Mammary epithelial cell (primary cell): ENCODE measurements at regions of chr7 and their contacts with region 1.

Region 1: GRCh38 chr7:27095897-27096767 is at the start of gene HOXA1:
- DNase-seq: peak; percentile 92
- H3K4me3 ChIP-seq: peak within 1 kb of the TSS; percentile 82 to 97 (median 91)
- H3K27ac ChIP-seq: peak within 1 kb of the TSS; percentile 97
- H3K4me1 ChIP-seq: peaks cover 26% of the 10 kb centered on the region
- H3K27me3 ChIP-seq: no peaks in the 10 kb centered on the region
- CTCF ChIP-seq: no peak
- total RNA-seq, gene HOXA1: 2.5 to 9.4 TPM

Region 2: GRCh38 chr7:26585081-26585641 is 511.0 kb before region 1 on chr7:
- CTCF ChIA-PET with region 1: no interaction called
- dilution Hi-C with region 1: no loop called
- in situ Hi-C with region 1: no loop called
- intact Hi-C with region 1: no loop called
- DNase-seq: peak; percentile 22
- H3K4me3 ChIP-seq: no peak overlapping the region
- H3K27ac ChIP-seq: no peak overlapping the region
- H3K4me1 ChIP-seq: no peaks in the 10 kb centered on the region
- H3K27me3 ChIP-seq: no peaks in the 10 kb centered on the region
- CTCF ChIP-seq: no peak

Region 3: DNA sequence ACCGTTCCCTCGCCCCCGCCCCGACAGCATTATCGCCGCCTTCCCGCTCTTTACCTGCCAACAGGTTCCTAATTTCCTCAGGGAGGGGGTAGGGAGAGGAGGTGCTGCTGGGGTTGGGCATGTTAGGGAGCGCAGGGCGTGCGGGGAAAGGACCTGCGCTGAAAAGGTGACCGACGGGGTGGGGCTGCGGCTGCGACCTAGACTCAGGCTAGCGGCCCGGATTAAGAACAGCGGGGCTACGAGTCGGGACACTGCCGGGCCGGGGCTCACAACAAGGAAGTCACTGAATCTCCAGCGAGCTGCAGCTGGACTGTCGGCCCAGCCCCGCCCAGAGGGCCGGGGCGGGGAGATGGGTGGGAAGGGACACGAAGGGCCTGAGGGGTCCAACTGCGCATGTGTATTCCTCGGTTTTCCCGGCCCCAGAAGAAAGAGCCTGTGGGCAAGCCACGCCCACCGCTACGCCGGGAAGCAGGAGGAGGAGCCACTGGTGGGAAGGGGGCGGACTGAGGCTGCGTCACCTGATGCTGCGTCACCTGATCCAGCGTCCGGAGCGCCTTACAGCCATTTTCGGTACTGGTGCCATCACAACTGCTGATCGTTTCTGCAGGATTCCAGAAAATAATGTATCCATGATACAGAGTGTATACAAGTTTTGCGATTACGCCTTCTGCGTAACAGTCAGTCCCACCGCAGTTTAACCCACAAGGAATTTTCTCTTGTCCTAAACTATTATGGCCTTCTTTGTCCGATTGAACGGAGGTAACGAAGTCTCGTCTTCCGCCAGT is 231.6 kb before region 1 on chr7 and contains the start of gene SKAP2:
- CTCF ChIA-PET with region 1: no interaction called
- dilution Hi-C with region 1: loop called (anchors 5 kb)
- in situ Hi-C with region 1: loop called in 1 of 2 experiments (anchors 5 kb)
- intact Hi-C with region 1: loop called (anchors 1 kb)
- DNase-seq: peak; percentile 99
- H3K4me3 ChIP-seq: peak within 1 kb of the TSS; percentile 54 to 73 (median 72)
- H3K27ac ChIP-seq: peak within 1 kb of the TSS; percentile 93
- H3K4me1 ChIP-seq: peaks cover 31% of the 10 kb centered on the region
- H3K27me3 ChIP-seq: no peaks in the 10 kb centered on the region
- CTCF ChIP-seq: no peak
- total RNA-seq, gene SKAP2: 19.8 to 38.9 TPM

Region 4: GRCh38 chr7:26948617-26949118 is 147.5 kb before region 1 on chr7:
- CTCF ChIA-PET with region 1: no interaction called
- dilution Hi-C with region 1: no loop called
- in situ Hi-C with region 1: no loop called
- intact Hi-C with region 1: loop called (anchors 1 kb)
- DNase-seq: peak; percentile 91
- H3K4me3 ChIP-seq: peak overlapping the region in 1 of 3 experiments; percentile 8
- H3K27ac ChIP-seq: peak overlapping the region; percentile 75
- H3K4me1 ChIP-seq: peaks cover 16% of the 10 kb centered on the region
- H3K27me3 ChIP-seq: no peaks in the 10 kb centered on the region
- CTCF ChIP-seq: no peak

Region 5: DNA sequence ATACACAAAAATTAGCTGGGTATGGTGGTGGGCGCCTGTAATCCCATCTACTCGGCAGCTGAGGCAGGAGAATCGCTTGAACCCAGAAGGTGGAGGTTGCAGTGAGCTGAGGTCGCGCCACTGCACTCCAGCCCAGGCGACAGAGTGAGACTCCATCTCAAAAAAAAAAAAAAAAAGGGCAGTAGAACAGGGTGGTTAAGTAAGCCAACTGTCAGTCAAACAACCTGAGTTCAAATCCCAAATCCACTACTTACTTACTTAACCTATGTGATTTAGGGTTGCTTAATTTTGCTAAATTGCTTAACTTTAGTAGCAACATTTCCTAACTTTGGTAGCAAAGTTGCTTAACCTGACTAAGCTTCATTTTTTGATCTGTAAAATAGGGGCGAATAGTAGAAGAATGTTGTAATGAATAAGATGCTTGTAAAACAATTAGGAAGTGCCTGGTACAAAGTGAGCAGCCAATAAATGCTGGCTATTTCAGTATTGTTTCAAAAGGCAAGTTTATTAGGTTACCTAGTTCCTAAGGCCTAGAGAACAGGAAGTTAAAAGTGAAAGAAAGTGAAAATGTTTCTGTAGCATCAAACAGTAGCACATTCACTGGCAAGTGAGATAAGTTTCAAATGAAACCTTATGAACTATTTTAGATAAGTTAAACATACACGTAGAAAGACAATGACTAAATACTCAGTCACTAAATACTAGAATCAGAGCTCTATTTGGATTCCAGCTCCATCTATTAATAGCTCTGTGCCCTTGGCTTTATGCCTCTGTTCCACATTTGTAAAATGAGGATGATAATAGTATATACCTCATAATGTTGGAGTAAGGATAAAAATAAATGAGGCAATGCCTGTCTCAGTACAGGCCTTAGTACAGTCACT is 64.6 kb before region 1 on chr7:
- CTCF ChIA-PET with region 1: no interaction called
- dilution Hi-C with region 1: no loop called
- in situ Hi-C with region 1: no loop called
- intact Hi-C with region 1: loop called (anchors 2 kb)
- DNase-seq: peak; percentile 61
- H3K4me3 ChIP-seq: peak overlapping the region in 2 of 3 experiments; percentile 0 to 4
- H3K27ac ChIP-seq: peak overlapping the region; percentile 42
- H3K4me1 ChIP-seq: peaks cover 2% of the 10 kb centered on the region
- H3K27me3 ChIP-seq: no peaks in the 10 kb centered on the region
- CTCF ChIP-seq: no peak

Region 6: DNA sequence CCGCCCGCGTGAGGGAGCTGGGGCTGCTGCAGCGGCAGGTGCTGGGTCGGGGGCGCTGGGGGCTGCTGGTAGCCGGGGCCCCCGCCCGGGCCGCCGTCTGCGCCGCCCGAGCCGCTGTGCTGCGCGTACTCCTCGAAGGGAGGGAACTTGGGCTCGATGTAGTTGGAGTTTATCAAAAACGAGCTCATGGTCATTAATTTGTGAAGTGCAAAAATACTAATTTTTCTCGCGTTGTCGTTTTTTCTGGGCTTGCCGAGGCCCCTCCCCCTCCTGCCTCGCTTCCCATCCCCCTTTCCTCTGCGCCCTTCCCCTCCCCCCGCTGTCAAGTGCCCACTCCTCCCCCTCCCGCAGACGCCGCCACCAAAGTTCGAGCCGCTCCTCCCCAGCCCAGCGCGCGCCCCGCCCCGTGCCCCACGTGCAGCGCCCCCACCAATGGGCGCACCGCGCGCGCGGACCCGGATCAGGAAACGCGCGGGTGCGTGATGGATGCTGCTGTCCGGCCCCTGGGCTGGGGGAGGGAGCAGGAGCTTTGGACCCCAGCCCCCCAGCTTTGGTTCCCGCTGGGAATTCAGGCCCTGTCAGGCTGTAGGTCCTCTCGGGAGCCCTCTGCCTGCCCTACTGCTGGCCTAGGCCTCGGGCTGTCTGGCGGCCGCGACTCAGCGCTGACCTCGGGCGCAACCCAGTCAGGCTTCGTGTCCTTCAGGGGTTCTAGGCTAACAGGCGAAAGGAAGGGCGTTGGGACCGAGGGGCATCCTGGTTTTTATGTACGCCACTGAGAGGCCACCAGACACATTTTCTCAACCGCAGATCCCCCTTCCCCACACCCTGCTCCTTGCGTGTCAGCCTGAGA is 34.6 kb after region 1 on chr7 and contains the start of gene HOXA4:
- CTCF ChIA-PET with region 1: interaction called, 29 read pairs
- dilution Hi-C with region 1: no loop called
- in situ Hi-C with region 1: no loop called
- intact Hi-C with region 1: no loop called
- DNase-seq: peak; percentile 89
- H3K4me3 ChIP-seq: peak within 1 kb of the TSS; percentile 59 to 73 (median 63)
- H3K27ac ChIP-seq: peak within 1 kb of the TSS; percentile 35
- H3K4me1 ChIP-seq: peaks cover 34% of the 10 kb centered on the region
- H3K27me3 ChIP-seq: no peaks in the 10 kb centered on the region
- CTCF ChIP-seq: no peak
- total RNA-seq, gene HOXA4: 1.5 TPM in 1 of 2 donors, not detected in the other